Activated B cell treated with CpG ODN at 0.5 μM for 24 hours (primary cell): ENCODE measurements at regions of chr10 and their contacts with region 1.

Region 1: GRCh38 chr10:92290837-92291615 is at the starts of genes CPEB3 and MARCHF5:
- DNase-seq: peak; percentile 87
- ATAC-seq: peak; percentile 97
- H3K4me3 Mint-ChIP-seq: peak within 1 kb of the TSS; percentile 96
- H3K27ac Mint-ChIP-seq: peak within 1 kb of the TSS; percentile 84
- H3K4me1 Mint-ChIP-seq: peaks cover 28% of the 10 kb centered on the region
- H3K27me3 Mint-ChIP-seq: no peaks in the 10 kb centered on the region
- CTCF ChIP-seq: no peak
- total RNA-seq, gene CPEB3: 2.2 and 2.5 TPM in 2 replicates
- total RNA-seq, gene MARCHF5: 21.6 and 26.5 TPM in 2 replicates

Region 2: DNA sequence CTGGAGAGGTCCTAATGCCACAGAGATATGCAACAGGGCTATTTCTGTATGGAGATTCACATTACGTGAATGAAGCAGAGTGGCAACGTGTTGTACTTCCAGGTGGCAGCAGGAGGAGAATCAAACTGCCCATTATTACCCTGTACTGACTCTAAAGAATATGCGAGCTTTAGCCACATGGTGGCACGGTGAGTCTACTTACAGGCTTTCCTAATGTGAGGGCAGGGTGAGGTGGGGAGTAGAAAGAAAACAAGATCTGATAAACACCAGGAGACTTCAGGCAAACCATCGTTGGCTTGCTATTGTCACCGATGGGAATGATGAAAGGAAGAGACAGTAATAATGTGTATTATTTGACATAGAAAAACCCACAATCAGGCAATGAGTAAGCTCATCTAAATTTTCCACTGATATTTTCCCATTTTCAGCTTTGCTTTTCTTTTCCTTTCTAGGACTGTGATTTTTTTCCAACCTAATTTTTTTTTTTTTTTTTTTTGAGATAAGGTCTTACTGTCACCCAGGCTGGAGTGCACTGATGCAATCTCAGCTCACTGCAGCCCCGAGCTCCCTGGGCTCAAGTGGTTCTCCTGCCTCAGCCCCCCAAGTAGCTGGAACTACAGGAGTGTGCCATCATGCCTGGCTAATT is 203.2 kb before region 1 on chr10:
- CTCF ChIA-PET with region 1: interaction called, 72 read pairs
- POLR2A ChIA-PET with region 1: interaction called, 23 read pairs
- intact Hi-C with region 1: loop called (anchors 1 kb)
- DNase-seq: peak; percentile 22
- ATAC-seq: peak; percentile 100
- H3K4me3 Mint-ChIP-seq: no peak overlapping the region
- H3K27ac Mint-ChIP-seq: no peak overlapping the region
- H3K4me1 Mint-ChIP-seq: peaks cover 7% of the 10 kb centered on the region
- H3K27me3 Mint-ChIP-seq: no peaks in the 10 kb centered on the region
- CTCF ChIP-seq: no peak

Region 3: GRCh38 chr10:92142949-92143348 is 148.1 kb before region 1 on chr10:
- CTCF ChIA-PET with region 1: interaction called, 3 read pairs
- POLR2A ChIA-PET with region 1: interaction called, 11 read pairs
- intact Hi-C with region 1: loop called (anchors 1 kb)
- DNase-seq: no peak
- ATAC-seq: peak; percentile 25
- H3K4me3 Mint-ChIP-seq: peak overlapping the region; percentile 73
- H3K27ac Mint-ChIP-seq: peak overlapping the region; percentile 83
- H3K4me1 Mint-ChIP-seq: peaks cover 61% of the 10 kb centered on the region
- H3K27me3 Mint-ChIP-seq: no peaks in the 10 kb centered on the region
- CTCF ChIP-seq: no peak

Region 4: GRCh38 chr10:92240289-92241157 is 50.5 kb before region 1 on chr10:
- CTCF ChIA-PET with region 1: interaction called, 3 read pairs
- POLR2A ChIA-PET with region 1: interaction called, 6 read pairs
- intact Hi-C with region 1: loop called (anchors 1 kb)
- DNase-seq: peak; percentile 32
- ATAC-seq: peak; percentile 66
- H3K4me3 Mint-ChIP-seq: peak overlapping the region; percentile 96
- H3K27ac Mint-ChIP-seq: peak overlapping the region; percentile 85
- H3K4me1 Mint-ChIP-seq: peaks cover 39% of the 10 kb centered on the region
- H3K27me3 Mint-ChIP-seq: no peaks in the 10 kb centered on the region
- CTCF ChIP-seq: no peak

Region 5: DNA sequence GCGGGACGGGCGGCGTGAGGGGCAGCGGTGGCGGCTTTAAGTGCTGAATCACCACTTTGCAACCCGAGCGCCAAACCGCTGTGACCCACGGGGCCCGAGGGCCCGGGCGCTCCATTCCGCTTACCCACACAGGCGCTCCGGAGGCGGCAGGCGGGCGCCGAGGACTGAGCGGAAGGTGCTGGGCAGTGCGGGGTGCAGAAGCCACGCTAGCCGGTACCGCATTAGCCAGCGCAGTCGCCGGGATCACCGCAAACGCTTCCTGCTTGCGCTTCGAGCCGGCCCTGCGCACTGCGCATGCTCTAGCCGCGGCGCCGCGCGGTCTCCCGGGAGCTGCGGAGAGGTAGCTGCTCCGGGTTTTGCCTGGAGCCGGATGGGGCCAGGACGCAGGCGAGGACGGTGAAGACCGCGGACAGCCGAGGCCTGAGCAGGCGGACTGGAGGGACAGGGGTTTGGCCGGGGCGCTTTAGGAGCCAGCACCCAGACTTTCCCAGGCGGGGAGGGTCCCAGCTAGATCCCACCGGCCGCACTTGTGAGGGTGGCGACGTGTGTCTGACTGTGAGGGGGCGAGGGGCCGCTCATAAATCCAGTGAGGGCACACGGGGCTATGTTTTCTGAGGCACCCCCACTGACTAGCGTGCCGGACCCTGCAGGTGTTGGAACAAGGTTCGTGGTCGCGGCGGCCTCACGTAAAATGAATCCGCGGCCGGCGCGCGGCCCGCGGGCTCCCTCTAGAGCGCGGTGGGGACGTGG is 282.9 kb after region 1 on chr10 and contains the start of gene IDE:
- CTCF ChIA-PET with region 1: no interaction called
- POLR2A ChIA-PET with region 1: interaction called, 6 read pairs
- intact Hi-C with region 1: loop called (anchors 1 kb)
- DNase-seq: peak; percentile 84
- ATAC-seq: peak; percentile 76
- H3K4me3 Mint-ChIP-seq: peak within 1 kb of the TSS; percentile 88
- H3K27ac Mint-ChIP-seq: peak within 1 kb of the TSS; percentile 85
- H3K4me1 Mint-ChIP-seq: peaks cover 40% of the 10 kb centered on the region
- H3K27me3 Mint-ChIP-seq: no peaks in the 10 kb centered on the region
- CTCF ChIP-seq: no peak
- total RNA-seq, gene IDE: 37.7 and 39.2 TPM in 2 replicates